SK-N-SH (cell line): ENCODE measurements at regions of chr9 and their contacts with region 1.

Region 1: GRCh38 chr9:4984621-4985385 is at the start of gene JAK2:
- DNase-seq: peak; percentile 91
- H3K4me3 ChIP-seq: peak within 1 kb of the TSS; percentile 82 to 86
- H3K27ac ChIP-seq: peak within 1 kb of the TSS; percentile 94 to 97
- H3K4me1 ChIP-seq: peaks cover 12 to 14% of the 10 kb centered on the region in 2 experiments; a peak in 3 of 4 replicates
- H3K27me3 ChIP-seq: no peaks in the 10 kb centered on the region
- CTCF ChIP-seq: peak; percentile 40
- EP300 ChIP-seq: 0 out of 4 replicates have a peak, but pooled peaks of 1 of the 2 experiments have one; percentile 13
- RAD21 ChIP-seq: 0 out of 2 replicates have a peak, but pooled peaks have one; percentile 2
- polyA plus RNA-seq, gene JAK2: 1.3 and 2.3 TPM in 2 replicates

Region 2: GRCh38 chr9:4973246-4973645 is 11.6 kb before region 1 on chr9:
- CTCF ChIA-PET with region 1: interaction called, 21 read pairs
- POLR2A ChIA-PET with region 1: interaction called, 5 read pairs
- DNase-seq: no peak
- H3K4me3 ChIP-seq: no peak overlapping the region
- H3K27ac ChIP-seq: no peak overlapping the region
- H3K4me1 ChIP-seq: no peaks in the 10 kb centered on the region; a peak in 1 of 4 replicates
- H3K27me3 ChIP-seq: no peaks in the 10 kb centered on the region
- CTCF ChIP-seq: no peak
- EP300 ChIP-seq: no peak
- RAD21 ChIP-seq: no peak